Heart right ventricle (tissue), 16 donors: ENCODE measurements at regions of chr20 and their contacts with region 1.

Region 1: DNA sequence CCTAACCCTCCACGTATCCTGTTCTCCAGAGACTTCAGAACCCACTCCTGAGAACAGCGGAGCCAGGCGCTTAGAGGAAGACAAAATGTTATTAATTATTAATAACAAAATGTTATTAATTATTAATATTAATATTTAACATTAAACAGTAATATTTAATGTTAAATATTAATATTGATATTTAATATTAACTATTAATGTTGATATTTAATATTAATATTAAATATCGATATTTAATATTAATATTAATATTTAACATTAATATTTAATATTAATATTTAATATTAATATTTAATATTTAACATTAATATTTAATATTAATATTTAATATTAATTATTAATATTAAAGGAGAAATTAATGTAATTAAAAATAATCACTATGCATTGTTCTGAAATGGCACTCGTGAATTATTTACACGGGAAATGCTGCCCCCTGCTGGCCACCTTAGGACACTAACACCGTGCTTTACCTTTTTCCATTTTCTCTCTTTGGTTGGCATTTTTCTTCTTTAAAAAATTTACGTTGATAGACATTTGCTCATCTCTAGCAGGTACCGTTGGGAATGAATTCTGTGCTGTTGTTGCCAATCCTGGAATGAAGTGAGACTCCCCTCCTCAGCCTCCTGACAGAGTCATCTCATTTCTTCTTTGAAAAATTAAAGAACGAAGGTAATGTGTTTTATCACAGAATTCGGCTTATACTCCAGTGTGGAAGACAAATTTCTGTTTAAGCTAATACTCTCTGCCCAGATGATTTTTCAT is 7.5 kb upstream of the GGTLC1 start:
- DNase-seq: peak; percentile 34 to 59
- ATAC-seq: no peak
- H3K4me3 ChIP-seq: no peak overlapping the region
- H3K27ac ChIP-seq: no peak overlapping the region
- H3K4me1 ChIP-seq: no peaks in the 10 kb centered on the region
- H3K27me3 ChIP-seq: peaks cover 0 to 42% (median 15%) of the 10 kb centered on the region in 7 donors
- CTCF ChIP-seq: peak; percentile 68 to 89 (median 80)

Region 2: GRCh38 chr20:23679133-23680092 is 316.7 kb before region 1 on chr20:
- intact Hi-C with region 1: loop called in 2 of 10 experiments (anchors 5 kb)
- DNase-seq: no peak
- ATAC-seq: no peak
- H3K4me3 ChIP-seq: no peak overlapping the region
- H3K27ac ChIP-seq: no peak overlapping the region
- H3K4me1 ChIP-seq: peaks cover 0 to 11% (median 0%) of the 10 kb centered on the region in 9 donors
- H3K27me3 ChIP-seq: no peaks in the 10 kb centered on the region
- CTCF ChIP-seq: no peak

Region 3: GRCh38 chr20:23937303-23938117 is 58.6 kb before region 1 on chr20:
- intact Hi-C with region 1: loop called in 8 of 10 experiments (anchors 1 to 10 kb)
- DNase-seq: peak; percentile 20 to 45
- ATAC-seq: peak; percentile 88 to 97 (median 91)
- H3K4me3 ChIP-seq: no peak overlapping the region
- H3K27ac ChIP-seq: no peak overlapping the region
- H3K4me1 ChIP-seq: no peaks in the 10 kb centered on the region
- H3K27me3 ChIP-seq: peaks cover 0 to 20% (median 0%) of the 10 kb centered on the region in 7 donors
- CTCF ChIP-seq: peak; percentile 60 to 84 (median 78)

Region 4: GRCh38 chr20:23967253-23967979 is 28.7 kb before region 1 on chr20:
- intact Hi-C with region 1: no loop called
- DNase-seq: peak in 1 of 2 donors; percentile 33
- ATAC-seq: peak; percentile 55 to 94 (median 70)
- H3K4me3 ChIP-seq: no peak overlapping the region
- H3K27ac ChIP-seq: peak overlapping the region in 5 of 10 donors; percentile 32 to 67 (median 38)
- H3K4me1 ChIP-seq: peaks cover 0 to 19% (median 6%) of the 10 kb centered on the region in 9 donors
- H3K27me3 ChIP-seq: peaks cover 0 to 2% (median 0%) of the 10 kb centered on the region in 7 donors
- CTCF ChIP-seq: no peak